Cardiac septum (tissue), 1 donor: ENCODE measurements at regions of chr5 and their contacts with region 1.

Region 1: DNA sequence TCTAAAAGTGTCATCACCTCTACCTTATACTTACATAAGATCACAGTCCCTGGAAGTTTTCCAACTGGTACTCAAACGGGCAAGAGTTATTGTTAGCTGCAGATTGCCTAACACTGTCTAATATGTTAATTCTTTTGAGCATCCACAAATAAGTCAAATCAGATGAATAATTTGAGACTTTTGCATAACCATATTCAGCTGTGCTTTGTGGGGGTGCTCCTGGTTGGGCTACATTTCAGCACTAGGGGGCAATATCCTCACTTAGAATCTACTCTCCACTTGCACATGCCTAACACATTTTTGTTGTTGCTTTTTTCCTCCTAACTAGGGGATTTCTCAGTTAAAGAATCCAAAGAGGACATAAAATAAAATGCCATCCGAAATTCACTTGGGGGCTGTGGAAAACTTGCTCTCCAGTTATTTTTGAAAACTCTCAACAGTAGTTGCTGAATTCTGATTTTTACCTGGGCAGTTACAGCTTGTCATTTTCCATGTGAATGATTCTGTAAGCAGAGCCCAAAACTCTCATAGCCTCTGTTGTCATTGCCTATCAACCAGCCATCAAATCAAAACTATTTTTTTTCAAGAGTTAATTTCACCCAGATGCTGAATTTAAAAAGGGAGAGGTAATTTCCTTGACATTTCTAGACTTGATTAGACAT is 71.5 kb downstream of the TRIM36 start:
- DNase-seq: no peak

Region 2: DNA sequence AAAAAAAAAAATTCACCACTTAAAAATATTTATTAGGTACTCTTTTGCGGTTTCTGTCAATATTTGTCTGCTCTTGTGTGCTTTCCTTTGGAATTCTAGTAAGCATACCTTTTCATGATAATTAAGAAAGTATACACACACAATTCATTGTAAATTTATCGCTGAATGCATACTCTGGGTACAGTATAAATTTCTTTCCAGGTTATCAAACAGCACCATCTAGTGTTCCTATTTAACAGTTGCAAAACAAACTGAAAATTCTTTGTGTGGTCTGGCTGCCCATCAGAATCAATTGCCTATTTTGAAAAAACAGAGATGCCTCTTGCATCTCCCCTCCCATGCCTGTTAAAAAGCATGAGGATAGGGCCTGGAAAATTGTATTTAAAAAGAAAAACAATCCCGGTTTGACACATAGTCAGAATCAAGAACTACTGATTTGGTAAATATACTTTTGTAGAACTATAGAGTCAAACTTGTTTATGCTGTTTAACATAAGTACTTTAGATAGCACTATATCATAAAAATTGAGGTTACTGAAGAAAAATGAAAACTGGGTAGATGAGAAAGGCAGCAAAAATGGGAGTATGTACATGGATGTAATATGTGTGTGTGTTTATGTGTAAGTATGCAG is 148.3 kb after region 1 on chr5:
- intact Hi-C with region 1: loop called (anchors 5 kb)
- DNase-seq: no peak

Region 3: GRCh38 chr5:115594128-115595047 is 496.2 kb after region 1 on chr5:
- intact Hi-C with region 1: loop called (anchors 5 kb)
- DNase-seq: no peak